ENCODE measurements at regions of chr1 and their contacts with region 1.

Region 1: GRCh38 chr1:25216123-25216522 is 16.2 kb downstream of the SYF2 start:
- DNase-seq: no peak
- H3K4me3 Mint-ChIP-seq: no peak overlapping the region
- H3K27ac Mint-ChIP-seq: no peak overlapping the region
- H3K4me1 Mint-ChIP-seq: peaks cover 2% of the 10 kb centered on the region
- H3K27me3 Mint-ChIP-seq: no peaks in the 10 kb centered on the region

Region 2: GRCh38 chr1:25073640-25074270 is 142.4 kb before region 1 on chr1:
- CTCF ChIA-PET with region 1: no interaction called
- POLR2A ChIA-PET with region 1: no interaction called
- intact Hi-C with region 1: no loop called
- DNase-seq: no peak
- H3K4me3 Mint-ChIP-seq: no peak overlapping the region
- H3K27ac Mint-ChIP-seq: no peak overlapping the region
- H3K4me1 Mint-ChIP-seq: no peaks in the 10 kb centered on the region
- H3K27me3 Mint-ChIP-seq: no peaks in the 10 kb centered on the region

Region 3: GRCh38 chr1:25150985-25151495 is 65.1 kb before region 1 on chr1:
- CTCF ChIA-PET with region 1: no interaction called
- POLR2A ChIA-PET with region 1: no interaction called
- intact Hi-C with region 1: no loop called
- DNase-seq: no peak
- H3K4me3 Mint-ChIP-seq: no peak overlapping the region
- H3K27ac Mint-ChIP-seq: no peak overlapping the region
- H3K4me1 Mint-ChIP-seq: no peaks in the 10 kb centered on the region
- H3K27me3 Mint-ChIP-seq: peaks cover 27% of the 10 kb centered on the region

Region 4: GRCh38 chr1:25204797-25205480 is 11.2 kb before region 1 on chr1:
- CTCF ChIA-PET with region 1: interaction called, 18 read pairs
- POLR2A ChIA-PET with region 1: no interaction called
- intact Hi-C with region 1: no loop called
- DNase-seq: no peak
- H3K4me3 Mint-ChIP-seq: no peak overlapping the region
- H3K27ac Mint-ChIP-seq: no peak overlapping the region
- H3K4me1 Mint-ChIP-seq: no peaks in the 10 kb centered on the region
- H3K27me3 Mint-ChIP-seq: peaks cover under 1% of the 10 kb centered on the region

Region 5: DNA sequence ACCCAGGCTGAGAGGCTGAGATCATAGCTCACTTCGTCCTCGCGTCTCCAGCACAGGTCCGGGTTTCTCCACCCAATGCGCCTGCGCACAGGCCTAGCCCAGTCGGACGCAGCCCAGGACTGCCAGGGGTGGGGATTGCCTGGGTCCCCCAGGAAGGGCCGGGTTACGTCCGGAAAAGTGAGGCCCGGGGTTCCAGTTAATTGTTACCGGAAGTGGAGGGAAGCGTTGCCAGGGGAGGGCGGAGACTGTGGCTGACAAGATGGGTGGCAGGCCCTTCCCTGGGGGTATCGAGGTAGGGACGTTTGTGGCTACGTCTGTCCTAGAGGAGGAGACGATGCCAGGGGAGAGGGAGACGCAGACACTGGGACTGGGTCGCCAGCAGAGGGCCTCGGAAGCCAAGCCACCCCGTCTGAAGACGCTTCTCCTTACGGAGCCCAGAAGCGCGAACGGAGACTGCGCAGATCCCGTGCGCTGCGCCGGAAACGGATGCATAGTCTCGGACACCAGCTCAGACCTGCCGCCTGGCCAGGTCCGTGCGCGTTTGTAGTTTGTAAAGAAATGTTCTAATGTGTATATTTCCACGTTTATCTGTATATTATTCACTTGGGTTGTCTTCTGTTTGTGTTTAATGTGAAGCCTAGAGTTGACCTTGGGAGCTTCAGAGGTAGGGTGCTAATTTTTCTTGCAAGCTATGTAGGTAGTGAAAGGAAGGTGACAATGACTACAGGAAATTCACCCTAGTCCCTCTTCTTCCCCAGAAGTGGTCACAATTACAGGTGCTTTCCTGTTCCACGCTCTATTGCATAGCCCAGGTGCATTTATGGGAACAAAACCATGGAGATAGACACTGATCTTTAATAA is 23.8 kb after region 1 on chr1:
- CTCF ChIA-PET with region 1: no interaction called
- POLR2A ChIA-PET with region 1: no interaction called
- intact Hi-C with region 1: no loop called
- DNase-seq: peak; percentile 97
- H3K4me3 Mint-ChIP-seq: peak overlapping the region; percentile 84
- H3K27ac Mint-ChIP-seq: peak overlapping the region; percentile 96
- H3K4me1 Mint-ChIP-seq: peaks cover 51% of the 10 kb centered on the region
- H3K27me3 Mint-ChIP-seq: no peaks in the 10 kb centered on the region

Region 6: GRCh38 chr1:25458541-25459298 is 242.6 kb after region 1 on chr1:
- CTCF ChIA-PET with region 1: no interaction called
- POLR2A ChIA-PET with region 1: no interaction called
- intact Hi-C with region 1: no loop called
- DNase-seq: no peak
- H3K4me3 Mint-ChIP-seq: no peak overlapping the region
- H3K27ac Mint-ChIP-seq: no peak overlapping the region
- H3K4me1 Mint-ChIP-seq: no peaks in the 10 kb centered on the region
- H3K27me3 Mint-ChIP-seq: no peaks in the 10 kb centered on the region

Measured in activated CD4-positive, alpha-beta memory T cell treated with anti-CD3 and anti-CD28 coated beads for 36 hours (primary cell).